ENCODE measurements at regions of chr9 and their contacts with region 1.

Region 1: GRCh38 chr9:68844631-68845612 is 139.9 kb downstream of the PIP5K1B start:
- DNase-seq: no peak
- ATAC-seq: peak; percentile 57
- H3K4me3 Mint-ChIP-seq: no peak overlapping the region
- H3K27ac Mint-ChIP-seq: no peak overlapping the region
- H3K4me1 Mint-ChIP-seq: peaks cover 21% of the 10 kb centered on the region
- H3K27me3 Mint-ChIP-seq: no peaks in the 10 kb centered on the region
- CTCF ChIP-seq: peak; percentile 50

Region 2: DNA sequence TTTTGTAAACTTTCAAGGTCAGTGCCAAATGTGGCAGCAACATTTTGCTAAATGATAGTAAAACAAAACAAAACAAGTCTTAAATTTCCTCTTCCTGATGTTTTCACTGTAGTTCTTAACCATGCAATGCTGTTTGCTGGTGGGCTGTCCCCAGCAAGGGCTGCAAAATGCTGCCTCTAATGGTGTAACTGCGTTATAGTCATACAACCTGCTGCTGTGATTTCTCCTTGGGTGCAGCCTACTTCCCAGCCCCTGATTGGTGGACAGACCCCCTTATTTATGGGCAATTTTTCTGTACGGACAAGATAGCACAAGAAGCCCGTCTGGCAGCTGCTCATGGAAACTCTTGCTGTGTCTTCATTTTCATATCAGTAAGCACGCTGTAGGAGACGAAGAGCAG is 166.5 kb before region 1 on chr9:
- CTCF ChIA-PET with region 1: interaction called, 4 read pairs
- POLR2A ChIA-PET with region 1: no interaction called
- intact Hi-C with region 1: loop called (anchors 2 kb)
- DNase-seq: no peak
- ATAC-seq: peak; percentile 65
- H3K4me3 Mint-ChIP-seq: no peak overlapping the region
- H3K27ac Mint-ChIP-seq: no peak overlapping the region
- H3K4me1 Mint-ChIP-seq: peaks cover 14% of the 10 kb centered on the region
- H3K27me3 Mint-ChIP-seq: no peaks in the 10 kb centered on the region
- CTCF ChIP-seq: no peak

Region 3: DNA sequence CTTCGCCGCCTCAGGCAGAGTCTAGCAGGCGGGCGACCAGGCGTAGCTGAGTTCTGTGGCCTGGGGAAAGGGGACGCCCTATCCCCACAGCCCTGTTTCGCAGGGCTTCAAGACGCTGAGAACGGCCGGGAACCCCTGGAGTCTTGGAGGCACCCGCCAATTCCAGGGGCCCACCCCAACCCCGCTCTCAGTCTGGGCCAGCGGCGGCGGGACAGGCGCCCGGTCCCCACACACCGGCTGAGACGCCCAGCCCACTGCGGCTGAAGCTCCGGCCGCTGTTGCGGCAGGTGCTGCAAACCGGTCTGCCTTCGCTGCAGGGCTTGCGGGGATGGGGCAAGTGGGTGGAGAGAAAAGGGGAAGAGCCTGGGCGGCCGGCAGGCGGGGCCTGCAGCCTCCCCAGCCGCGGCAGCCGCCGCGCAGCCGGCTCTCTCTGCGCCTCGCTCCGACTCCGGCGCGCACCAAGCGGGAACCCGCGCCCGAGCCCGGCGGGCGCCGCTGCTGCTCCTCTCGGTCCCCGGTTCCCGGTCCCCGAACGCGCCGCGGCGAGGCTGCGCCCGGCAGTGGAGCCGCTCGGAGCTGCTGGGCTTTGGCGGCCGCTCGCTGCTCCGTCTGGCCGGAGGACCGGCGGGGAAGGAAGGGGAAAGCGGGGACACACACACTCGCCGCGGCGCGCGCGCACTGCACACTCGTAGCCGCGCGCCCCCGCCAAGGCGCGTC is 139.9 kb before region 1 on chr9 and contains the start of gene PIP5K1B:
- CTCF ChIA-PET with region 1: interaction called, 7 read pairs
- POLR2A ChIA-PET with region 1: no interaction called
- intact Hi-C with region 1: loop called (anchors 1 kb)
- DNase-seq: peak; percentile 76
- ATAC-seq: peak; percentile 85
- H3K4me3 Mint-ChIP-seq: peak within 1 kb of the TSS; percentile 97
- H3K27ac Mint-ChIP-seq: peak within 1 kb of the TSS; percentile 82
- H3K4me1 Mint-ChIP-seq: peaks cover 50% of the 10 kb centered on the region
- H3K27me3 Mint-ChIP-seq: no peaks in the 10 kb centered on the region
- CTCF ChIP-seq: no peak
- total RNA-seq, gene PIP5K1B: 17.1 and 22.0 TPM in 2 replicates

Region 4: GRCh38 chr9:68793605-68794343 is 51.1 kb before region 1 on chr9:
- CTCF ChIA-PET with region 1: no interaction called
- POLR2A ChIA-PET with region 1: no interaction called
- intact Hi-C with region 1: loop called (anchors 5 kb)
- DNase-seq: no peak
- ATAC-seq: peak; percentile 84
- H3K4me3 Mint-ChIP-seq: no peak overlapping the region
- H3K27ac Mint-ChIP-seq: no peak overlapping the region
- H3K4me1 Mint-ChIP-seq: peaks cover 25% of the 10 kb centered on the region
- H3K27me3 Mint-ChIP-seq: no peaks in the 10 kb centered on the region
- CTCF ChIP-seq: no peak

Region 5: GRCh38 chr9:69027355-69028096 is 182.6 kb after region 1 on chr9:
- CTCF ChIA-PET with region 1: no interaction called
- POLR2A ChIA-PET with region 1: no interaction called
- intact Hi-C with region 1: loop called (anchors 1 kb)
- DNase-seq: no peak
- ATAC-seq: peak; percentile 89
- H3K4me3 Mint-ChIP-seq: no peak overlapping the region
- H3K27ac Mint-ChIP-seq: no peak overlapping the region
- H3K4me1 Mint-ChIP-seq: peaks cover 7% of the 10 kb centered on the region
- H3K27me3 Mint-ChIP-seq: no peaks in the 10 kb centered on the region
- CTCF ChIP-seq: no peak

Region 6: DNA sequence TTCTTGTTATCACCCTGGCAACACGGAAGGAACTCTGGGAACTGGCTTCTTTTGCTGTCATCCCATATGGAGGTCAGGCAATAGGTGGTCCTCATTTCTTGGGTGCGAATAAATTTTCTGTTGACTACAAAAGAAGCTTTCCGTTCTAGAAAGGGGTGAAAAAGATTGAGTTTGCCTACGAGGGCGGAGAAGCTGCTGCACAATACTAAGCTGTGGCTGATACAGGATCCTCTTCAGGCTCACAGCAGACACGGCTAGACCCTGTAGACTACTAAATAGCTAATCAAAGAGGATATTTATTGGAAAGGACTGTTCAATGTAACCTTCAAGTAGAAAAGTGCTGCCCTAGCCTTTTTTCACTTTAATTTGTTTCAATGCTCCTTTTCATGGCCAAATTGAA is 387.2 kb after region 1 on chr9:
- CTCF ChIA-PET with region 1: no interaction called
- POLR2A ChIA-PET with region 1: no interaction called
- intact Hi-C with region 1: no loop called
- DNase-seq: no peak
- ATAC-seq: no peak
- H3K4me3 Mint-ChIP-seq: no peak overlapping the region
- H3K27ac Mint-ChIP-seq: no peak overlapping the region
- H3K4me1 Mint-ChIP-seq: no peaks in the 10 kb centered on the region
- H3K27me3 Mint-ChIP-seq: no peaks in the 10 kb centered on the region
- CTCF ChIP-seq: no peak

Region 7: DNA sequence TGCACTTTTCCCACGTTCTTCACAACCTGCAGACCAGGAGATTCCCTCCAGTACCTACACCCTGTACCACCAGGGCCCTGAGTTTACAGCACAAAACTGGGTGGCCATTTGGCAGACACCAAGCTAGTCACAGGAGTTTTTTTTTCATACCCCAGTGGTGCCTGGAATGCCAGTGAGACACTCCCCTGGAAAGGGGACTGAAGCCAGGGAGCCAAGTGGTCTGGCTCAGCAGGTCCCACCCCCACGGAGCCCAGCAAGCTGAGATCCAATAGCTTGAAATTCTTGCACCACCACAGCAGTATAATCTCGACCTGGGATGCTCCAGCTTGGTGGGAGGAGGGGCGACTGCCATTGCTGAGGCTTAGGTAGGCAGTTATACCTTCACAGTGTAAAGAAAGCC is 1387.6 kb after region 1 on chr9:
- CTCF ChIA-PET with region 1: no interaction called
- POLR2A ChIA-PET with region 1: no interaction called
- intact Hi-C with region 1: no loop called
- DNase-seq: no peak
- ATAC-seq: no peak
- H3K4me3 Mint-ChIP-seq: no peak overlapping the region
- H3K27ac Mint-ChIP-seq: no peak overlapping the region
- H3K4me1 Mint-ChIP-seq: no peaks in the 10 kb centered on the region
- H3K27me3 Mint-ChIP-seq: peaks cover 7% of the 10 kb centered on the region
- CTCF ChIP-seq: no peak